ENCODE measurements at regions of chr7 and their contacts with region 1.

Region 1: DNA sequence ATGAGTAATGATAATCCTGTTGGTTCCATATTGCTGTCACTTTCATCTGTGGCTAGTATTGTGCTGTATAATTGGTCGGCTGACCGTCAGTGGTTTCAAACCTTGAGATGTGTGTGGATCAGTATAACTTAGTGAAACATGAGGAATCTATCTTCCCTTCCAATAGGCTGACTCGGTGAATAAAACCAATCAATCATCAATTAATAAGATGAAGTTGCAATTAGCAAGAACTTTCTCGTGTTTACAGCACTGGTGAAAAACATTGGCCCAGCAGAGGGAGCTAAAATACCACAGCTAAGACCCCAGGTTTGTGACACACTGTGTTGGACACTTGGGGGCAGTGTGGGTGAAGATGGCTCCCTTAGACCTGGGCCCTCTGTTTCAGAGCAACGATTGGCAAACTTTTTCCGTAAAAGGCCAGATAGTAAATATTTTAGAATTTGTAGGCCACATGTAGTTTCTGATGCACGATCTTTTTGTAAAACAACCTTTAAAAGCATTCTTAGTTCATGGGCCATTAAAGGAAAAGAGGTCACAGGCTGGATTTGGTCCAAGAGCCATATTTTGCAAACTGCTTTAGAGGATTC is 47.8 kb downstream of the STRA8 start:
- DNase-seq: peak; percentile 82 to 94 (median 89)
- H3K4me3 ChIP-seq: peak overlapping the region in 1 of 4 donors; percentile 28
- H3K27ac ChIP-seq: peak overlapping the region in 1 of 5 donors; percentile 21
- H3K4me1 ChIP-seq: peaks cover 0 to 7% of the 10 kb centered on the region in 2 donors
- H3K27me3 ChIP-seq: no peaks in the 10 kb centered on the region
- CTCF ChIP-seq: peak; percentile 78 to 99 (median 97)
- POLR2A ChIP-seq: no peak

Region 2: GRCh38 chr7:135558337-135558767 is 276.9 kb after region 1 on chr7:
- intact Hi-C with region 1: loop called (anchors 5 to 10 kb)
- DNase-seq: peak; percentile 41 to 77 (median 48)
- H3K4me3 ChIP-seq: peak overlapping the region; percentile 19 to 85 (median 76)
- H3K27ac ChIP-seq: peak overlapping the region; percentile 55 to 99 (median 93)
- H3K4me1 ChIP-seq: peaks cover 5 to 11% of the 10 kb centered on the region in 2 donors
- H3K27me3 ChIP-seq: no peaks in the 10 kb centered on the region
- CTCF ChIP-seq: peak in 5 of 6 experiments; percentile 26 to 57 (median 49)
- POLR2A ChIP-seq: no peak

Region 3: DNA sequence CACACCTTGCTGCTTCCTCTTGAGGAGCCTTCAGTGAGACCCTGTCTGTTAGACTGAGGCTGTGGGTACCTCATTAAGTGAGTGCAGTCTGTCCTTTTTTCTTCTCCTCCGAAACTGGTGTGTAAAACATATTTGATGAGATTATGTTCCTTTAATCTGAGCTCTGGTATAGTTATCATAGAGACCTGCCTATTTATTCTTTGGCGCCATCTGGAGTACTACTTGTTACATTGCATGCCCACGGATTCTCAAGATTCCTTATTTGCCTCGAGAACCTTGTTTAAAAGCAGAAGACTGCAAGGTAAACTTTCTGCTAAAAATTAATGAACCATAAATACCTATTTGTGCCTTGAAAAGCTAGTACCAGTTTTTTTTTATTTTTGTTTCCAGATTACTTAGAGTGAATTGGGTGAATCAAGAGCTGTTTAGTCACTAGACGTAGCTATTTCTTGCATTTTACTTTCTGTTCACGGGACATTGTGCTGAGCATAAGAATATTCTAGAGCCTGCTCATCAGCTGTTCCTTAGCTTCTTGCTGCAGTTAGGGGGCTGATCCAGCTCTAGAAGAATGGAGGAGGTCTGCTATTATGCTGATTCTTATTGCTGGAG is 363.9 kb after region 1 on chr7:
- intact Hi-C with region 1: loop called (anchors 5 to 10 kb)
- DNase-seq: peak in 2 of 7 donors; percentile 43 to 48
- H3K4me3 ChIP-seq: no peak overlapping the region
- H3K27ac ChIP-seq: no peak overlapping the region
- H3K4me1 ChIP-seq: no peaks in the 10 kb centered on the region
- H3K27me3 ChIP-seq: no peaks in the 10 kb centered on the region
- CTCF ChIP-seq: peak; percentile 64 to 80 (median 70)
- POLR2A ChIP-seq: no peak

Measured in adrenal gland (tissue), 19 donors.